PC-3 (cell line): ENCODE measurements at regions of chr1 and their contacts with region 1.

Region 1: DNA sequence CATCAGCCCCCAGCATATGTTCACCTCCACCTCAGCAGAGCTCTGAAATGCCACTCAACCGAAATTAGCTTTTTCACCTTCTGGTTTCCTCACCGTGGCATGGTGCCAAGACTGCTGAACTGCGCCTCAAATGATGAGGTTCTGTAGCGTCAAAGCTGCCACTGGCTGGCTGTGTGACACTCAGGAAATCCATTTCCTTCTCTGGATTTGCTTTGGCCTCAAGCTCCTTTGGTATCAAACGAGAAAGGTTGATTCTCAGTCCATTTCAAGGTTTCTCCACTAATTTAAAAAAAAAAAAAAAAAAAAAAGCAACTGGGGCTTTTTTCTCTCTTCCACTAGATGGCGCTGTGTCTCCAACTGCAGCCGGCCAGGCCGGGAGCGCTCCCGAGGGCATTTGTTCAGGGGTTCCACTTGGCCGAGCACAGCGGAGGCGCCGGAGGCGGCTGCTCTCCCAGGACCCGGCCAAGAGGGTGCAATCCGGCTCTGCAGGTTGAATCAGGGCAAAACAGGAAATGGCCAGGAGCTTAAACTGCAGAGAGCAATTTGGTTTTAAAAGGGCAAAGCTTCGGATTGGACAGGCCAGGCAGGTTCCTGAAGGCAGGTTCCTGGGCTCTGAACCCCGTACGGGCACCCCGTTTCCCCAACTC is 26.5 kb upstream of the PLA2G2C start:
- DNase-seq: peak; percentile 92
- ATAC-seq: peak; percentile 77
- H3K4me3 ChIP-seq: peak overlapping the region; percentile 36; the same call in 1 of the 2 replicates
- H3K27ac ChIP-seq: peak overlapping the region; percentile 99
- H3K4me1 ChIP-seq: peaks cover 48% of the 10 kb centered on the region
- H3K27me3 ChIP-seq: no peaks in the 10 kb centered on the region
- CTCF ChIP-seq: peak; percentile 88

Region 2: GRCh38 chr1:19563324-19564097 is 649.3 kb before region 1 on chr1:
- CTCF ChIA-PET with region 1: no interaction called
- POLR2A ChIA-PET with region 1: no interaction called
- intact Hi-C with region 1: no loop called
- DNase-seq: no peak
- ATAC-seq: no peak
- H3K4me3 ChIP-seq: no peak overlapping the region
- H3K27ac ChIP-seq: no peak overlapping the region
- H3K4me1 ChIP-seq: no peaks in the 10 kb centered on the region; the same call in 1 of the 2 replicates
- H3K27me3 ChIP-seq: no peaks in the 10 kb centered on the region
- CTCF ChIP-seq: no peak

Region 3: DNA sequence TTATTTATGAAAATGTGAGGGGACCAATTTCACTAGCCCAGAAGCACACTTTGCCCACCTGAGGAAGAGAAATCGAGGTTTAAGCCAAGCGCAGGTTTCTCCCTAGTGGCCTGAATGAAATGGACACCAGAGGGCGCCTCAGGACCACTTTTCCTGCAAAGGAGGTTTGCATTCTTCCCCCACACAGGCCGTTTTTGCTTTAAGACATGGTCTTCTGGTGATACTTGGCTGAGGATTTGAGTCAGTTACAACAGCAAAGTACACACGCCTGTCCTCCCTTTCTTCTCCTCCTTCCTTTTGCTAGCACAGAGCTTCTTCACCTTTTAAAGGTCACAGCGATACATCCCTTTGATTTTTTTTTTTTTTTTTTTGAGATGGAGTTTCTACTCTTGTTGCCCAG is 294.8 kb before region 1 on chr1:
- CTCF ChIA-PET with region 1: interaction called, 10 read pairs
- POLR2A ChIA-PET with region 1: no interaction called
- intact Hi-C with region 1: no loop called
- DNase-seq: peak; percentile 89
- ATAC-seq: peak; percentile 74
- H3K4me3 ChIP-seq: no peak overlapping the region
- H3K27ac ChIP-seq: no peak overlapping the region
- H3K4me1 ChIP-seq: no peaks in the 10 kb centered on the region
- H3K27me3 ChIP-seq: no peaks in the 10 kb centered on the region
- CTCF ChIP-seq: peak; percentile 96

Region 4: DNA sequence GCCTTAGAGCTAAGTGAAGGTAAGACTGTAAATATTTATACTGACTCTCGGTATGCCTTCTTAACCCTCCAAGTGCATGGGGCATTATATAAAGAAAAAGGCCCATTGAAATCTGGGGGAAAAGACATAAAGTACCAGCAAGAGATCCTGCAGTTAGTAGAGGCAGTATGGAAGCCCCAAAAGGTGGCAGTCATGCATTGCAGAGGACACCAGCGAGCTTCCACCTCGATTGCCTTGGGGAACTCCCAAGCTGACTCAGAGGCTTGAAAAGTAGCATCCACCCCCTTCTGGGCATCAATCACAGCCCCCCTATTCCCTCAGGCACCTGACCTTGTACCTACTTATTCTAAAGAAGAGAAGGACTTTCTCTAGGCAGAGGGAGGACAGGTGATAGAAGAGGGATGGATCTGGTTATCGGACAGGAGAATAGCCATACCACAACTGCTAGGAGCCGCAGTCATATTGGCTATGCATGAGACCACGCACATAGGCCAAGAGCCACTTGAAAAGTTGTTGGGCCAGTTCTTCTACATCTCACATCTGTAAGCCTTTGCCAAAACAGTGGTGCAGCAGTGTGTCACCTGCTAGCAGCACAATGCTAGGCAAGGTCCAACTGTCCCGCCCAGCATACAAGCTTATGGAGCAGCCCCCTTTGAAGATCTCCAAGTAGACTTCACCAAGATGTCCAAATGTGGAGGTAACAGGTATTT is 54.3 kb before region 1 on chr1:
- CTCF ChIA-PET with region 1: interaction called, 19 read pairs
- POLR2A ChIA-PET with region 1: no interaction called
- intact Hi-C with region 1: no loop called
- DNase-seq: peak; percentile 71
- ATAC-seq: peak; percentile 37; the same call in 1 of the 2 replicates
- H3K4me3 ChIP-seq: no peak overlapping the region
- H3K27ac ChIP-seq: peak overlapping the region; percentile 45
- H3K4me1 ChIP-seq: peaks cover 9% of the 10 kb centered on the region; the same call in 1 of the 2 replicates
- H3K27me3 ChIP-seq: no peaks in the 10 kb centered on the region
- CTCF ChIP-seq: peak; percentile 59

Region 5: DNA sequence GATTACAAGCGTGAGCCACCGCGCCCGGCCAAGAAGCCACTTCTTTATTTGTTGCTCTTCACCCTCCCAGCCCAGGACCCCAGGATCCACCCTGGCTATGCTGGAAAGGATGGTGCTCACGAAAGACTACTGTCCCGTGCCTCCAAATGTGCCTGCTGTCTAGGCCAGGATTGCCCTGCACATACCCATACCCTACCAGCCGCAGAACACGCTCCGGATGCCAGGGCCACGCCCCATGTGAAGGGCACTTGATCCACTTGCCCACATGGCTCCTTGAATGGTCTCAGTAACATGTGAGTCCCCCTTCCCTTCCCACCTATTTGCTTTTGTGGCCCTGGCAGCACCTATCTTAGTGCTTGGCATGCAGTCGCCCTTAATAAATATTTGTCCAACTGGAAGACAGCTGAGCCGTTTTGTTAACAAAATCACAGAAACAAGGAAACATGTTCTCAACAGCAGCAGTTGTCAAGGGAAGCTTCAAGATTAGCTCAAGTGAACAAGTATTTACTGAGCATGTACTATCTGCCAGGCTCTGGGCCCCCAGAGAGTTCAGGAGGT is 40.7 kb before region 1 on chr1:
- CTCF ChIA-PET with region 1: interaction called, 3 read pairs
- POLR2A ChIA-PET with region 1: interaction called, 14 read pairs
- intact Hi-C with region 1: loop called (anchors 2 kb)
- DNase-seq: peak; percentile 37
- ATAC-seq: peak; percentile 42
- H3K4me3 ChIP-seq: no peak overlapping the region
- H3K27ac ChIP-seq: peak overlapping the region; percentile 56
- H3K4me1 ChIP-seq: peaks cover 24% of the 10 kb centered on the region
- H3K27me3 ChIP-seq: no peaks in the 10 kb centered on the region
- CTCF ChIP-seq: no peak

Region 6: GRCh38 chr1:20358761-20359263 is 146.0 kb after region 1 on chr1:
- CTCF ChIA-PET with region 1: interaction called, 5 read pairs
- POLR2A ChIA-PET with region 1: no interaction called
- intact Hi-C with region 1: loop called (anchors 5 kb)
- DNase-seq: peak; percentile 64
- ATAC-seq: peak; percentile 87
- H3K4me3 ChIP-seq: no peak overlapping the region
- H3K27ac ChIP-seq: no peak overlapping the region
- H3K4me1 ChIP-seq: peaks cover 38% of the 10 kb centered on the region
- H3K27me3 ChIP-seq: no peaks in the 10 kb centered on the region
- CTCF ChIP-seq: no peak

Region 7: DNA sequence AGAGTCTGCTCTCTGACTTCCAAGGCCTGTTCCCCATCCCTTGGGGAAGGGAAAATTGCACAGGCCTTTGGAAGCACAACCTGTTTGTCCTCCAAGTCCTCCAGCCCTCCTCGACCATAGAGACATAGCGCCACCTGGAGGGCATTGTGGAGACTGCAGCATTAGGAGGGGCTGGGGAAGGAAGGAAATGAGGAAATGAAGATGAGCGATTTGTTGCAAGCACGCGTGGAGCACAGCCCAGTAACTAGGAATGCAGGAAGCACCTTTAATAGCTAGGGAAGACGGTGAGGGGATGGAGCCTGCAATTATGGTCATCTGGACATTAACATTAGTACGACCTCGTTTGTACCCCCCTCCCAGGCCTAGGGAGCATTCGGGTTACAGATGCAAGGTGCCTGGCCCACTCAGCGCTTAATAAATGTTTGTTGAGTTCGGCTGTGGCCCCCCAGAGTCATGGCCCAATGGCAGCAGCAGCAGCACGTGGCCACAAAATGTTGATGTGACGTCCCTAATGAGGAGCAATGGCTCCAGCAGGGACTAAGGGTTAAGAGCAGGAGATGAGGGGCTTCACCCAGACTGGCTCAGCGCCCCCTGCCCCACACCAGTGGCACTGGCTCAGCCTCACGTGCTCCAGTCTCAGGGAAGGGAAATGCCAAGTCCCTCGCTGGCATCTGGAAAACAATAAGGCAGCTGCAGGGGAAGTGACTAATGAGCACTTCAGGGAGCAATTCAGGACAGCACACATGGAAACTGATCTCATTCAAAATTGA is 281.2 kb after region 1 on chr1:
- CTCF ChIA-PET with region 1: interaction called, 23 read pairs
- POLR2A ChIA-PET with region 1: no interaction called
- intact Hi-C with region 1: loop called (anchors 1 kb)
- DNase-seq: peak; percentile 97
- ATAC-seq: peak; percentile 57
- H3K4me3 ChIP-seq: no peak overlapping the region
- H3K27ac ChIP-seq: peak overlapping the region; percentile 98
- H3K4me1 ChIP-seq: peaks cover 47% of the 10 kb centered on the region
- H3K27me3 ChIP-seq: no peaks in the 10 kb centered on the region
- CTCF ChIP-seq: peak; percentile 95